ENCODE measurements at regions of chr6 and their contacts with region 1.

Region 1: GRCh38 chr6:134870677-134871498 is 79.0 kb downstream of the ALDH8A1 start:
- DNase-seq: no peak
- H3K4me3 ChIP-seq: no peak overlapping the region
- H3K27ac ChIP-seq: no peak overlapping the region
- H3K4me1 ChIP-seq: no peaks in the 10 kb centered on the region
- H3K27me3 ChIP-seq: no peaks in the 10 kb centered on the region
- CTCF ChIP-seq: no peak
- POLR2A ChIP-seq: no peak

Region 2: GRCh38 chr6:134063966-134064445 is 806.9 kb before region 1 on chr6:
- intact Hi-C with region 1: no loop called
- DNase-seq: peak; percentile 63
- H3K4me3 ChIP-seq: no peak overlapping the region
- H3K27ac ChIP-seq: peak overlapping the region in 1 of 2 donors; percentile 34
- H3K4me1 ChIP-seq: no peaks in the 10 kb centered on the region
- H3K27me3 ChIP-seq: no peaks in the 10 kb centered on the region
- CTCF ChIP-seq: peak; percentile 32 to 87 (median 79)
- POLR2A ChIP-seq: no peak

Region 3: DNA sequence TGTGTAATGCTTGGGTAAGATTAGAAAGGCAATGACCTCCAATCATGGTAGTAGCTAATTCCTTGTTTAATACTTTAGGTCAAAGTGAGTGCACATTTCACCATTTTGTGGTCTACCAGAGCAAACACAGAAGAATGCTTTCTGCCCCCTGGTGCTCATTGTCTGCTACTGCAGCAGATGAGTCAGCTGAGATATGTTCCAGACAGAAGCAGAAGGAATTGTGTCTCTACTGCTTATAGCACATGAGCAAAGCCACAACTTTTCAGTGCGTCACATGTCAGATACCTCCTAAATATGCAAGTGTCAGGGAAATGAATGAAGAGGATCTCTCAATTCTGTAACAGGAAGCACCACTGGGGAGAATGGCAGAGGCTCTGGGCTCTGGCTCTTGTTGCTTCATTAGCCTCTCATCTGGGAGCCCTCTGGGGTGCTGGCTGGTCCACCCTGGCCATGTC is 229.9 kb before region 1 on chr6:
- intact Hi-C with region 1: loop called (anchors 10 kb)
- DNase-seq: peak; percentile 65
- H3K4me3 ChIP-seq: no peak overlapping the region
- H3K27ac ChIP-seq: no peak overlapping the region
- H3K4me1 ChIP-seq: no peaks in the 10 kb centered on the region
- H3K27me3 ChIP-seq: no peaks in the 10 kb centered on the region
- CTCF ChIP-seq: peak; percentile 72 to 93 (median 92)
- POLR2A ChIP-seq: no peak

Region 4: DNA sequence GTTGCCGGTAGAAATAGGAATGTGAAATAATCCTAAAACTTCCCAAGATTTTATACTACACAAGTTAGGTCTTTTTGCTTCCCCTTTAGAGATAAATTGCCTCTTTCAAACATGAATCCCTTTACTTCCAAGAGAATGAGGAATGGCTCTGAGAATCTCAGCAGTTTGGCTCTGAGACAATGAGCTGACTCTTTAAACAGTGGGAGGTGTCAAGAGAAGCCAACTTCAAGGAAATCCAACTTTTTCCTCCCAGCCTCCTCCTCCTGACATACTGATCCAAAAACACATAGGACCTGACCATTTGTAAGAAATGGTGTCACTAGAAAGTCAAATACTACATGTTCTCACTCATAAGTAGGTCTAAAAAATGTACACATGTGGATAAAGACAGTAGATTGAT is 75.2 kb before region 1 on chr6:
- intact Hi-C with region 1: no loop called
- DNase-seq: no peak
- H3K4me3 ChIP-seq: no peak overlapping the region
- H3K27ac ChIP-seq: no peak overlapping the region
- H3K4me1 ChIP-seq: no peaks in the 10 kb centered on the region
- H3K27me3 ChIP-seq: no peaks in the 10 kb centered on the region
- CTCF ChIP-seq: no peak
- POLR2A ChIP-seq: no peak